ENCODE measurements at regions of chr14 and their contacts with region 1.

Region 1: GRCh38 chr14:103920981-103921854 is 7.0 kb upstream of the TDRD9 start:
- DNase-seq: peak; percentile 98
- CTCF ChIP-seq: peak; percentile 99

Region 2: GRCh38 chr14:103562429-103563225 is 358.6 kb before region 1 on chr14 and contains the starts of genes BAG5 and COA8:
- CTCF ChIA-PET with region 1: no interaction called
- POLR2A ChIA-PET with region 1: no interaction called
- DNase-seq: peak; percentile 96
- CTCF ChIP-seq: no peak

Region 3: DNA sequence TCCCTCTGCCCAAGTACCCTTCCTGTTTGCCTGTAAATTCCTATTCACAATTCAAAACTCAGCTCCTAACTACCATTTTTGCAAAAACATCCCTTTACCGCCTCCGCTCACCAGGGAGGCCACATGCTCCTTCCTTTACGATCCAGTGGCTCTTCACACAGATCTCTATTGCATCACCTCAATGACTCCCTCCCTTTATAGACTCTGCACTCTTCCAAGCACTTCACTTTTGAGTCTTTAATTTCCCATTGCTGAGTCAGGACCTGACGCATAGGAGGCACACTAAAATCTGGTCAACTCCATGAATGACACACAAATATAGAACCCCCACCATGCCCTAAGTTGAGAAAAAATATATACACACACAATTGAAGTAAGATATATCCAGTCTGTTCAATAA is 119.8 kb before region 1 on chr14:
- CTCF ChIA-PET with region 1: interaction called, 18 read pairs
- POLR2A ChIA-PET with region 1: no interaction called
- DNase-seq: no peak
- CTCF ChIP-seq: no peak

Region 4: DNA sequence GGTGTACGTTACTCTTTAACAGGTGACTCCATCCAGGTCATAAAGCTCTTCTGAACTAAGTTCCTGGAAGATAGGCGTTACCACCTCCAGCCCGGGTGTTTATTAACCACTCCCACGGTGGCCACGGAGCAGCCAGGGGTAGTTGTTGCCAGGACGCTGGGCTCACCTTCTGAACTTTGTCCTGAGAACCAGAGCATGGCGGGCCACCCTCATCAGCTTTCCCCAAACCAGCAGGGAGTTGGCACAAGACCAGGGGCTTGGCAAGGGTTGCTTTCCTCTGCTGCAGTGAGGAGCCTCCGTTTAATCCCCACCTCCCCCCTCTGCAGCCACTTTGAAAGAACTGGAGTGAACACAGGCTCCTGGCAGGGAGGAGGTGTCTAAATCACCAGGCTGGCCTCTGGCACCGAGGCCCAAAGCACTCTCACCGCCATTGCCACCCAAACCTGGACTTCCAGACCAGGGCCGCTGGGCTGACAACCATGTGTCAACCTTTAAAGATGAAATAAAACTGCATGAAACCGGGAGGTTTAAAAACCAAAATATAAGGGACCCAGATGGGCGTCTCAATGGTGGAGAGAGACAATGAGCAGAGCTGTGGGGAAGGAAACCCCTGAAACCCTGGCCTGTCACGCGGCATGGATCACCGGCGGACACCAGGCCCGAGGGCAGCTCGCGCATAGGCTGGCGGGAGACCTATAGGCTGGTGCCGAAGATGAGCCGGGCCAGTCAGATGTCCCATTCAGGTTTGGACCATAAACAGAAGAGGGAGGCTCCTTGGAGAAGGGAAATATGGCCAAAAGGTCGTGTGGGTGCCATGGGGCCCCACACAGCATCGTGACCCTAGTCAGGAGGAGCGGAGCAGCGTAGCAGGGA is 23.9 kb before region 1 on chr14:
- CTCF ChIA-PET with region 1: interaction called, 14 read pairs
- POLR2A ChIA-PET with region 1: no interaction called
- DNase-seq: no peak
- CTCF ChIP-seq: no peak

Region 5: DNA sequence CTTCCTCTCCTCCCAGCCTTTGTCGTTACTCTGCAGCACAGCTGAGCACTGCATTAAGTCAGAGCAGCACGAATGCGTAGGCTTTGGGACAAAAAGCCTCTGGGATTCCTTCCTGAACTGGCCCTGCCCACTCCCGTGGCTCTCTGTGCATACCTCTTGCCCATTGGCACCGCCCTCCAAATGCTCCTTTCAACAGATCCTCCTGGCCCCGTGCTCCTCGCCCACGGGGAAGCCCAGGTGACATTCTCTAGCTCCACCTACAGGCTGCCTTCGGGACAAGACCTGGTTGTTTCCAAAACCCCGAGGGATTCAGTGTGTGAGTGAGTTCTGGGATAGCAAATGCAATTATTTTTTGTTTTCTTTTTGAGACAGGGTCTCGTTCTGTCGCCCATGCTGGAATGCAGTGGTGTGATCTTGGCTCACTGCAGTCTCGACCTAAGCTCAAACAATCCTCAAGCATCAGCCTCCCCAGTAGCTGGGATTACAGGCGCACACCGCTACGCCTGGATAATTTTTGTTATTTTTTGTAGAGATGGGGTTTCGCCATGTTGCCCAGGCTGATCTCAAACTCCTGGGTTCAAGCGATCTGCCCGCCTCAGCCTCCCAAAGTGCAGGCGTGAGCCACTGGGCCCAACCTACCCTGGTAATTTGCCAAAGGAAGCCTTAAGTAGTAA is 10.8 kb before region 1 on chr14:
- CTCF ChIA-PET with region 1: interaction called, 53 read pairs
- POLR2A ChIA-PET with region 1: no interaction called
- DNase-seq: peak; percentile 82
- CTCF ChIP-seq: peak; percentile 82